PC-3 (cell line): ENCODE measurements at regions of chr5 and their contacts with region 1.

Region 1: GRCh38 chr5:163564321-163564938 is 59.0 kb downstream of the MAT2B start:
- DNase-seq: peak; percentile 84
- ATAC-seq: no peak
- H3K4me3 ChIP-seq: no peak overlapping the region
- H3K27ac ChIP-seq: no peak overlapping the region
- H3K4me1 ChIP-seq: peaks cover 14% of the 10 kb centered on the region
- H3K27me3 ChIP-seq: peaks cover 57% of the 10 kb centered on the region
- CTCF ChIP-seq: peak; percentile 93

Region 2: DNA sequence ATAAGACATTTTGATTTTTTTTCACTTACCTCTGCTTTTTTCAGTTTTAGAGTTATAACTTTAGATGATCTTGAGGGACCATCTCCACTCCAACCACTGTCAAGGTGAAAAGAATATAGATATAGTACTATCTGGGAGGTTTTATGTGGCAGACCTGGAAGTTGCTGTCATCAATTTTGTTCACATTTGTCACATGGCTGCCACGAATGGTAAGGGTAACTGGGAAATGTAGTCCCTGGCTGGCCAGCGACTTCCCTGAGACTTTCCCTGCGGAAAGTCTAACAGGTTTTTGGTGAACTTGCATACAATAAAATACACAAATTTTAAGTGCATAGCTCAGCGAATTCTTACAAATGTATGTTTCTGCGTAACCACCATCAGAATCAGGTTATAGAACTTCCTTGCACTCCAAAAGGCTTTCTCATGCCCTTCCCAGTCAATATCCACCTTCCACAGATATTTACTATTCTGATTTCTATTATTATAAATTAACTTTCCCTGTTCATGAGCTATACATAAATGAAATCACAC is 62.5 kb after region 1 on chr5:
- CTCF ChIA-PET with region 1: no interaction called
- POLR2A ChIA-PET with region 1: no interaction called
- intact Hi-C with region 1: loop called (anchors 5 kb)
- DNase-seq: no peak
- ATAC-seq: no peak
- H3K4me3 ChIP-seq: no peak overlapping the region
- H3K27ac ChIP-seq: no peak overlapping the region
- H3K4me1 ChIP-seq: no peaks in the 10 kb centered on the region
- H3K27me3 ChIP-seq: peaks cover 34% of the 10 kb centered on the region
- CTCF ChIP-seq: no peak

Region 3: GRCh38 chr5:163695830-163696578 is 131.6 kb after region 1 on chr5:
- CTCF ChIA-PET with region 1: no interaction called
- POLR2A ChIA-PET with region 1: no interaction called
- intact Hi-C with region 1: loop called (anchors 2 kb)
- DNase-seq: peak; percentile 64
- ATAC-seq: peak; percentile 95
- H3K4me3 ChIP-seq: no peak overlapping the region
- H3K27ac ChIP-seq: no peak overlapping the region
- H3K4me1 ChIP-seq: no peaks in the 10 kb centered on the region
- H3K27me3 ChIP-seq: 0 out of 2 replicates have a peak, but pooled peaks cover 7% of the 10 kb centered on the region
- CTCF ChIP-seq: peak; percentile 74